PC-3 (cell line): ENCODE measurements at regions of chr11 and their contacts with region 1.

Region 1: DNA sequence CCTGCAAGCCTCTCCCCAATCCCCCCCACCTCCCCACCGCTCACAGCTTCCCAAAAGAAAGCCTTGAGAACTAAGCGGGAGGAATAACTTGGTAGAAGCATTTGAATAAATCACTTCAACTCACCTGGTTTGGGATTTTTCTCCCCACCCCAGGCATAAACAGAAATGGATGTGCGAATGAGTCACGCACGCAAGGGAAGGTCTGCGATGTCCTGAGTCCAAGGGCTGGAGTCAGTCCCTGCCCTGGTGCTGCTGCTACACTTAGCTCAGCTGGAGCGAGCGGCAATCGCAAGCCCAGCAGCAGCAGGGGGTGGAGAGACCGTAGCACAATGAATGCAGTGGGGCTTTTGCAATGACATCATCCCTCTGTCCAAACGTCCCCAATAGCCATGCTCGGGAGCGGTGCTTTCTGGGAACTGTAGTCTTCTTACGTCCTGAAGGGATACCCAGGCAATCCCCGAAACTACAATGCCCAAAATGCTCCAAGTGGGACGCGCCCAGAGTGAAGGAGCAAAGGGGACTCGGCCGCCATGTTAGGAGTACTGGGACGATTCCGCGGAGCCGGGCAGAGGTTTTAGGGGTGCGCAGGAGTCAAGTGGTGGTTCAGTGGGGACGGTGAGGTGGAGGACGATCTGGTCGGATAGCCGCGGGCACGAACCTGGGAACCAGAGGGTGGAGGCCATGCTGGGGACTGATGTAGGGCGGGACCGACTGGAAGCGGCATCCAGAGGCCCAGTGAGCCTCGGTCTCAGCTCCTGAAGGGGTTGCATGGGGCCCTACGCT is at the start of gene RAB30:
- DNase-seq: peak; percentile 100
- ATAC-seq: peak; percentile 93
- H3K4me3 ChIP-seq: peak within 1 kb of the TSS; percentile 86
- H3K27ac ChIP-seq: peak within 1 kb of the TSS; percentile 63
- H3K4me1 ChIP-seq: peaks cover 38% of the 10 kb centered on the region
- H3K27me3 ChIP-seq: no peaks in the 10 kb centered on the region
- CTCF ChIP-seq: no peak
- total RNA-seq, gene RAB30: 6.6 and 8.2 TPM in 2 replicates

Region 2: GRCh38 chr11:82900277-82901164 is 171.2 kb before region 1 on chr11 and contains the start of gene PRCP:
- CTCF ChIA-PET with region 1: no interaction called
- POLR2A ChIA-PET with region 1: no interaction called
- intact Hi-C with region 1: loop called (anchors 1 kb)
- DNase-seq: peak; percentile 96
- ATAC-seq: peak; percentile 88
- H3K4me3 ChIP-seq: peak within 1 kb of the TSS; percentile 83
- H3K27ac ChIP-seq: peak within 1 kb of the TSS; percentile 9
- H3K4me1 ChIP-seq: peaks cover 22% of the 10 kb centered on the region
- H3K27me3 ChIP-seq: no peaks in the 10 kb centered on the region
- CTCF ChIP-seq: no peak
- total RNA-seq, gene PRCP: 36.6 and 51.5 TPM in 2 replicates

Region 3: GRCh38 chr11:82927254-82927880 is 144.4 kb before region 1 on chr11:
- CTCF ChIA-PET with region 1: interaction called, 3 read pairs
- POLR2A ChIA-PET with region 1: interaction called, 15 read pairs
- intact Hi-C with region 1: loop called (anchors 5 kb)
- DNase-seq: peak; percentile 80
- ATAC-seq: peak; percentile 89
- H3K4me3 ChIP-seq: no peak overlapping the region
- H3K27ac ChIP-seq: no peak overlapping the region
- H3K4me1 ChIP-seq: no peaks in the 10 kb centered on the region
- H3K27me3 ChIP-seq: no peaks in the 10 kb centered on the region
- CTCF ChIP-seq: peak; percentile 94

Region 4: GRCh38 chr11:82996966-82997606 is 74.7 kb before region 1 on chr11:
- CTCF ChIA-PET with region 1: no interaction called
- POLR2A ChIA-PET with region 1: no interaction called
- intact Hi-C with region 1: loop called (anchors 2 kb)
- DNase-seq: peak; percentile 83
- ATAC-seq: peak; percentile 94
- H3K4me3 ChIP-seq: peak overlapping the region; percentile 20; the same call in 1 of the 2 replicates
- H3K27ac ChIP-seq: peak overlapping the region; percentile 73
- H3K4me1 ChIP-seq: peaks cover 22% of the 10 kb centered on the region
- H3K27me3 ChIP-seq: no peaks in the 10 kb centered on the region
- CTCF ChIP-seq: no peak

Region 5: GRCh38 chr11:83051760-83052671 is 19.7 kb before region 1 on chr11:
- CTCF ChIA-PET with region 1: interaction called, 4 read pairs
- POLR2A ChIA-PET with region 1: interaction called, 4 read pairs
- intact Hi-C with region 1: loop called (anchors 1 kb)
- DNase-seq: peak; percentile 97
- ATAC-seq: peak; percentile 81
- H3K4me3 ChIP-seq: peak overlapping the region; percentile 34
- H3K27ac ChIP-seq: peak overlapping the region; percentile 91
- H3K4me1 ChIP-seq: peaks cover 71% of the 10 kb centered on the region
- H3K27me3 ChIP-seq: no peaks in the 10 kb centered on the region
- CTCF ChIP-seq: no peak

Region 6: DNA sequence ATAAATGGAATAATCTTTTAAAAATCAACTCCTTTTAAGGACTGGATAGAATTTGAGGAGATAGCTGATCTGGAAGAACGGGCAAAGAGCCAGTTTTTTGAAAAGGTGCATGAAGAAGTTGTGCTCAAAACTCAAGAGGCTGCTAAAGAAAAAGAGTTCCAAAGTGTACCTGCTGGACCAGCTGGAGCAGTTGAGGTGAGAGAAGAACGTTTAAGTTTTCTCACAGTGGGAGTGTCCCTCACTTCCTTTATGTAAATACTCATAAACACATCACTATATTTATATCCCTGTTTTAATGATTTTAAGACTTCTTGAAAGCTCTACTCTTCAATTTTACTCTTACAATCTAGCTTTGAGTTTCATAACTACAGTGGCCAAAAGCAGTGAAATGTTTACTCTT is 110.1 kb after region 1 on chr11:
- CTCF ChIA-PET with region 1: no interaction called
- POLR2A ChIA-PET with region 1: no interaction called
- intact Hi-C with region 1: loop called (anchors 5 kb)
- DNase-seq: peak; percentile 41
- ATAC-seq: peak; percentile 80
- H3K4me3 ChIP-seq: no peak overlapping the region
- H3K27ac ChIP-seq: peak overlapping the region; percentile 14; the same call in 1 of the 2 replicates
- H3K4me1 ChIP-seq: no peaks in the 10 kb centered on the region; the same call in 1 of the 2 replicates
- H3K27me3 ChIP-seq: no peaks in the 10 kb centered on the region
- CTCF ChIP-seq: no peak